ENCODE measurements at regions of chr4 and their contacts with region 1.

Region 1: GRCh38 chr4:39044364-39044955 is 12.3 kb upstream of the TMEM156 start:
- DNase-seq: peak; percentile 96
- H3K4me3 Mint-ChIP-seq: peak overlapping the region; percentile 85
- H3K27ac Mint-ChIP-seq: peak overlapping the region; percentile 92
- H3K4me1 Mint-ChIP-seq: peaks cover 63% of the 10 kb centered on the region
- H3K27me3 Mint-ChIP-seq: no peaks in the 10 kb centered on the region

Region 2: DNA sequence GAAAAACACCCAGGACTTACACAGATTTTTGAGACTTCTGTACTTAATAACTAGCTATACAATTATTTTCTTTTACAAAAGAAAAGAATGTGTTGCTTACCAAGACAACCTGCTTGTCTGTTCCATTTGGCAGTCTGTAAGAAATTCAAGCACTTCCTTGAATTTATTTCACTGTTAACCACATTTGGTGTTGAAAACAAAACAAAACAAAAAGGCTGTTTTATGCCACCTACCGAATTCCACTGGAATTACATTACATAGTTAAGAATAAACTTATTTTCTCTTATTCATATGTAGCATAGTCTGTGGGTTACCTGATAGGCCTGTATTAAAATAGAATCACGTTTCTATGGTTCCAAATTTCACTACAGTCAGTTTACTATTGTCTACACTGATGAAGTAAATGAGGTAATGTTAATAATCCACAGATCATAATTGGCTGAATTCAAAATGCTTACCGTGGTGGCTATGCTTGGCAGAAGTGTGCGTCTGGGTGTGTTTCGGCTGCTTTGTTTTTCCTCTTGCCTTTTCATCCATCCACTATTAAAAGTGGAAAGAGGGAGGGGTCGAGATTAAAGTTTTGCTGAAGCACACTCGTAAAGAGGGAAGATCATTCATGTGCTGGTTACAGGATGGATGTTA is 239.7 kb before region 1 on chr4 and contains the start of gene TLR1:
- intact Hi-C with region 1: no loop called
- DNase-seq: no peak
- H3K4me3 Mint-ChIP-seq: peak within 1 kb of the TSS; percentile 81
- H3K27ac Mint-ChIP-seq: peak within 1 kb of the TSS; percentile 87
- H3K4me1 Mint-ChIP-seq: peaks cover 38% of the 10 kb centered on the region
- H3K27me3 Mint-ChIP-seq: no peaks in the 10 kb centered on the region
- total RNA-seq, gene TLR1: 1.9 and 2.7 TPM in 2 replicates

Region 3: GRCh38 chr4:38889143-38889542 is 155.3 kb before region 1 on chr4:
- intact Hi-C with region 1: loop called (anchors 1 kb)
- DNase-seq: no peak
- H3K4me3 Mint-ChIP-seq: peak overlapping the region; percentile 63
- H3K27ac Mint-ChIP-seq: peak overlapping the region; percentile 91
- H3K4me1 Mint-ChIP-seq: peaks cover 41% of the 10 kb centered on the region
- H3K27me3 Mint-ChIP-seq: no peaks in the 10 kb centered on the region

Region 4: GRCh38 chr4:38958453-38959190 is 85.8 kb before region 1 on chr4:
- intact Hi-C with region 1: loop called (anchors 1 kb)
- DNase-seq: no peak
- H3K4me3 Mint-ChIP-seq: peak overlapping the region; percentile 46
- H3K27ac Mint-ChIP-seq: peak overlapping the region; percentile 96
- H3K4me1 Mint-ChIP-seq: peaks cover 62% of the 10 kb centered on the region
- H3K27me3 Mint-ChIP-seq: no peaks in the 10 kb centered on the region

Region 5: GRCh38 chr4:39134683-39135319 is 90.3 kb after region 1 on chr4:
- intact Hi-C with region 1: loop called (anchors 1 kb)
- DNase-seq: no peak
- H3K4me3 Mint-ChIP-seq: no peak overlapping the region
- H3K27ac Mint-ChIP-seq: no peak overlapping the region
- H3K4me1 Mint-ChIP-seq: peaks cover 19% of the 10 kb centered on the region
- H3K27me3 Mint-ChIP-seq: no peaks in the 10 kb centered on the region

Region 6: GRCh38 chr4:39353478-39354253 is 309.2 kb after region 1 on chr4:
- intact Hi-C with region 1: loop called (anchors 1 kb)
- DNase-seq: peak; percentile 32
- H3K4me3 Mint-ChIP-seq: peak overlapping the region; percentile 80
- H3K27ac Mint-ChIP-seq: peak overlapping the region; percentile 96
- H3K4me1 Mint-ChIP-seq: peaks cover 63% of the 10 kb centered on the region
- H3K27me3 Mint-ChIP-seq: no peaks in the 10 kb centered on the region

Region 7: DNA sequence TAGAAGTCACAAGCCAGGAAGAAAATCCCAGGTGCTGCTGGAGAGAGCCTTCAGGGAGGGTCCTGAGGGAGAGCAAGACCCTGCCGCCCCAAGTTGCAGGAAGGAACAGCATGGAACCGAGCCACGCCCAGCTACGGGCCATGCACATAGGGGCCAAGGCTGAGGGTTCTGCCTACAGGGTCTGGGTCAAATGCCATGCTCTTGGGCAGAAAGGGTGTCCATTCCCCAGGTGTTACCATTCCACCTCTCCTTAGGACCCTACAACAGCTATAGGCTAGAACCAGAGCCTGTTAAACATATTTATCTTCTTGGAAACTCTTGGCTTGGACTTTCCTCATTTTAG is 391.7 kb after region 1 on chr4:
- intact Hi-C with region 1: no loop called
- DNase-seq: no peak
- H3K4me3 Mint-ChIP-seq: no peak overlapping the region
- H3K27ac Mint-ChIP-seq: no peak overlapping the region
- H3K4me1 Mint-ChIP-seq: no peaks in the 10 kb centered on the region
- H3K27me3 Mint-ChIP-seq: peaks cover 7% of the 10 kb centered on the region